Heart left ventricle (tissue), 16 donors: ENCODE measurements at regions of chr14 and their contacts with region 1.

Region 1: GRCh38 chr14:68199554-68200151 is 380.1 kb downstream of the RAD51B start:
- DNase-seq: peak in 4 of 5 donors; percentile 34 to 66 (median 48)
- ATAC-seq: peak; percentile 61 to 91 (median 74)
- H3K4me3 ChIP-seq: peak overlapping the region in 1 of 12 donors; percentile 3
- H3K27ac ChIP-seq: peak overlapping the region; percentile 48 to 80 (median 64)
- H3K4me1 ChIP-seq: peaks cover 0 to 34% (median 14%) of the 10 kb centered on the region in 12 donors
- H3K27me3 ChIP-seq: no peaks in the 10 kb centered on the region
- CTCF ChIP-seq: peak in 5 of 12 donors; percentile 15 to 41 (median 23)
- POLR2A ChIP-seq: no peak

Region 2: GRCh38 chr14:68140111-68140741 is 59.4 kb before region 1 on chr14:
- intact Hi-C with region 1: loop called in 1 of 10 experiments (anchors 5 kb)
- DNase-seq: peak in 4 of 5 donors; percentile 24 to 61 (median 42)
- ATAC-seq: peak in 3 of 4 donors; percentile 48 to 73 (median 56)
- H3K4me3 ChIP-seq: no peak overlapping the region
- H3K27ac ChIP-seq: peak overlapping the region in 11 of 12 donors; percentile 35 to 89 (median 53)
- H3K4me1 ChIP-seq: peaks cover 3 to 71% (median 35%) of the 10 kb centered on the region in 12 donors
- H3K27me3 ChIP-seq: no peaks in the 10 kb centered on the region
- CTCF ChIP-seq: no peak
- POLR2A ChIP-seq: peak in 1 of 2 donors; percentile 32

Region 3: GRCh38 chr14:68157971-68158371 is 41.7 kb before region 1 on chr14:
- intact Hi-C with region 1: loop called in 1 of 10 experiments (anchors 5 kb)
- DNase-seq: no peak
- ATAC-seq: no peak
- H3K4me3 ChIP-seq: no peak overlapping the region
- H3K27ac ChIP-seq: peak overlapping the region in 1 of 12 donors; percentile 80
- H3K4me1 ChIP-seq: peaks cover 0 to 4% (median 0%) of the 10 kb centered on the region in 12 donors
- H3K27me3 ChIP-seq: no peaks in the 10 kb centered on the region
- CTCF ChIP-seq: no peak
- POLR2A ChIP-seq: no peak